ENCODE measurements at regions of chr2 and their contacts with region 1.

Region 1: GRCh38 chr2:71226965-71227560 is at the start of gene PAIP2B:
- DNase-seq: peak; percentile 93 to 99 (median 98)
- ATAC-seq: peak; percentile 90 to 91
- H3K4me3 Mint-ChIP-seq: peak within 1 kb of the TSS; percentile 93 to 99 (median 97)
- H3K27ac Mint-ChIP-seq: peak within 1 kb of the TSS; percentile 82 to 99 (median 96)
- H3K4me1 Mint-ChIP-seq: peaks cover 10 to 35% (median 27%) of the 10 kb centered on the region in 4 donors
- H3K27me3 Mint-ChIP-seq: peaks cover 0 to 11% (median 2%) of the 10 kb centered on the region in 5 donors
- polyA plus RNA-seq, gene PAIP2B: 1.9 to 2.5 (median 2.2) TPM

Region 2: GRCh38 chr2:71130113-71130904 is 96.8 kb before region 1 on chr2 and contains the starts of genes MCEE and MPHOSPH10:
- POLR2A ChIA-PET with region 1: interaction called, 21 read pairs
- DNase-seq: peak; percentile 80 to 95 (median 86)
- ATAC-seq: peak; percentile 88 to 90
- H3K4me3 Mint-ChIP-seq: no peak within 1 kb of the TSS
- H3K27ac Mint-ChIP-seq: peak within 1 kb of the TSS in 1 of 10 donors; percentile 73
- H3K4me1 Mint-ChIP-seq: peaks cover 7 to 27% (median 19%) of the 10 kb centered on the region in 4 donors
- H3K27me3 Mint-ChIP-seq: no peaks in the 10 kb centered on the region
- polyA plus RNA-seq, gene MCEE: 20.9 to 25.1 (median 22.2) TPM
- polyA plus RNA-seq, gene MPHOSPH10: 21.5 to 33.6 (median 24.1) TPM